ENCODE measurements at regions of chr7 and their contacts with region 1.

Region 1: DNA sequence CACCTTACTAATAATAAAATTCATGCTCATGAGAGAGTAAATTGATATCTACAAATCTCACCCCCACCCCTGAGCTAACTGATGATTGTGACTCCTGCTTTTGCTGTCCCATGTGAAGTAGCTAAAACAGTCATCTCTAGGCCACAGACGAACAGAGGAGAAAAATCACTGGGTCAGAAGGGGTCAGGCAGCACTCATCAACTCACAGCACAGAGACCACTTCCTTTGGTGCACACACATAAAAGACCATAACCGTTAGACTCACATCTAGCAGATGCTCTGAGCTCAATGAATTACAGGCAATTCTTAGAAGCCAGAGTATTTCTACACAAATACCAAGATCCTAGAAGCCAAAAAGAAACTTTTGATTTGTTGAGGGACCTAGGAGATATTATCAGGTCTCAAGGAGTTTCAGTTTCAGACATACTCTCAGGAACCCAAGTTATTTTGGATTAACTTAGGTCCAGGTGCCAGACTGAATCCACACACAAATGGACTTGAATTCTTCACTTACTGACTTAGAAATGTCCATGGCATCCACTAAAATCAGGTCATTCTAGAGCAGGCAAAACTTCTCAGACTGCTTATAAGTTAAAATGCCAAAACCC is 65.0 kb upstream of the TES start:
- DNase-seq: peak; percentile 80
- ATAC-seq: peak; percentile 98
- H3K4me3 Mint-ChIP-seq: peak overlapping the region; percentile 67
- H3K27ac Mint-ChIP-seq: peak overlapping the region; percentile 94
- H3K4me1 Mint-ChIP-seq: peaks cover 73% of the 10 kb centered on the region
- H3K27me3 Mint-ChIP-seq: peaks cover 3% of the 10 kb centered on the region

Region 2: DNA sequence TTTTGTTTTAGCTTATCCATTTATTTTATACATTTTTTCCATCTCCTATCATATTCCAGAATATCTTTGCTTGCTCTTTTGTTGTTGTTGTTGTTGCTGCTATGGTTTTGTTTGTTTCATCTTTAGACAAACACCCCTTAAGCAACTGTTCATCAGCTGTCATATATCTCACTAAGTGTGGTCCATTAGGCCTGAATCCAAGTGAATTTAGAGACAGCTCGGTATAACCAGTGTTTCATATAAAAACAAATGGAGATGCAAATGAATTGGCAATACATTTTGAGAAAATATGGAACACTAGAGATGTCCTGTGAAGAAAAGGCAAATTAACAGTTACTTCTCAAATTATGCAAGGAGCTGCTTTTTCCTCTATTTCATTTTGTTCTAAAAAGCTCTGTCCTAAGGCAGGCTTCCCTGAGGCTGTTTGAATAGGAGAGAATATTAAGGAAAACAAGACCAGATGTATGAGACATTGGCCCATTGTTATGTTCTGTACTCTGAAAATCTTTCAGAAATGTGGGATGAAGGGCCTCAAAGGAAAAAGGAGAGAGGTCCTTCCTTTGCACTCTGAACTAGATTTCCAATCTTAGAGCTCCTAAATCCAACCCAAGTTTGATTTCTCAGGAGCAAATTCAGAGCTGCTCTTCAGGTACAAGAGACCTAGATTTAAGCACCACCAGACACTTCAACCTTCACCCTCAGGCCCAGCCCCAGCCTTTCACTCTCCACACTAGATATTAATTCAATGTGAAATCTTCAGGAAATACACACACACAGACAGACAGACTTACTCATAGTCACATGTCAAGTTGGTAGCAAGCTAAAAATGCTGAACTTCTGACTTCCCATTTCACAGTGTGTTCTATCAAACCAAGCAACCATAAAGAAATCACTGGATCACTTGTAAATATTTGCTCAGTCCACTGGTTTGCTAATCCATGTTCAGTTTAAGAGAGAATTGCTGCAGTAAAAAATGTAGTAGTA is 120.2 kb before region 1 on chr7:
- CTCF ChIA-PET with region 1: no interaction called
- POLR2A ChIA-PET with region 1: no interaction called
- DNase-seq: no peak
- ATAC-seq: no peak
- H3K4me3 Mint-ChIP-seq: no peak overlapping the region
- H3K27ac Mint-ChIP-seq: no peak overlapping the region
- H3K4me1 Mint-ChIP-seq: no peaks in the 10 kb centered on the region
- H3K27me3 Mint-ChIP-seq: peaks cover 2% of the 10 kb centered on the region

Region 3: DNA sequence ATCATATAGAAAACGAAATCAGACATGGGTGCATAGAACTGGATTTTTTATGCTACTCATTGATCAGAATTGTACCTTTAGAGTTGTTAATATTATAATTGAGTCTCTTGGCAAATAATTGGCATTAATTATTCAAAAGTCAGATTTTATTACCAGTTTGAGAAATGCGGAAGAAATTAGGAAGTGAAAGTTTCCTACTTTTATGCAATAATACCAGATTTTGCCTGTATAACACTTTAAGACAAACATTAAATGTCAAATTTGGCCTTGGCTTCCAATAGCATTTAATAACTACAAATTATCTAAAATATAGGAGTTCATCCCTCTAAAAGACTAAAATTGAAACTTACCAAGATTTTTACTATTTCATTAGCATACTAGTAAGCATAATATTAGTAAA is 107.9 kb before region 1 on chr7:
- CTCF ChIA-PET with region 1: no interaction called
- POLR2A ChIA-PET with region 1: no interaction called
- DNase-seq: no peak
- ATAC-seq: no peak
- H3K4me3 Mint-ChIP-seq: no peak overlapping the region
- H3K27ac Mint-ChIP-seq: no peak overlapping the region
- H3K4me1 Mint-ChIP-seq: no peaks in the 10 kb centered on the region
- H3K27me3 Mint-ChIP-seq: no peaks in the 10 kb centered on the region

Region 4: DNA sequence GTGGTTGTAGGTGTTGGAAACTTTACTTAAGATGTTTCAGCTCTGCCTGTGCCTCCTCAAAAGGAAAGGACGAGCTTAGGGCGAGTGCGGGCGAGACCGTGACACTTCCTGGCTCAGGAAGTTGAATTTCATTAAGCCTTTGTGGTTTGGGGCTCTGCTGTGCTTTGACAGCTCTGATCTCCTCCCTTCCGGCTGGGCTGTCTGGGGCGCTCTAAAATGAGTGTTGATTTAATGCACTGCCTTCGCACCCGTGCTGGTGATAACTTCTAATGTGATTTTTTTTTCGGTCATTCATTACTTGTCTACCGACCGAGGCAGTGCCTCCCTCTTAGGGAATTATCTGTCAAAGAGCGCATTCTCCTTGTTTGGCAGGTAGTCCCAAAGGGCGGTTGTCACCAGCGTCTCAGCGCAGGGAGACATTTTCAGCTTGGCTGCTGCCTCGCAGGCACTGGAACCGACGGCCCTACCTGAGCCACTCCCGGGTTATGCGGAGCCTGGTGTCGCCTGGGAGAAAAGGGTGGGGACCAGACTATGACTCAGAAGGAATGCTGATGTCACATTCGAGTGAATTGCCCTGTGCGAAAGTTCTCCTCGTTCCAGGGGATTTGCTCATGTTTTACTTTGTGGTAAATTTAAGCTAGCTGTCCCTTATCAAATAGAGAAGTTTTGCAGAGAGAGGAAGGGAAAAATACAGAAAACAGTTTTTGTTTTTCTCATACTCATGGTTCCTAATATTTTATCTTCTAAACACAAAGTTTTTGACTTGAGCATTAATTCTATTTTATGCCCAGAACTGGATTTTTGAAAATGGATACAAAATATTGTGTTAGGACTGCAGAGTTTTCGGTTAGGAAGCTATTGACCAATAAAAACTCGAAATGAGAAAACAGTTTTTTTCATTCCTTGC is 65.9 kb after region 1 on chr7:
- CTCF ChIA-PET with region 1: interaction called, 4 read pairs
- POLR2A ChIA-PET with region 1: interaction called, 10 read pairs
- DNase-seq: peak; percentile 84
- ATAC-seq: peak; percentile 80
- H3K4me3 Mint-ChIP-seq: peak overlapping the region; percentile 95
- H3K27ac Mint-ChIP-seq: peak overlapping the region; percentile 97
- H3K4me1 Mint-ChIP-seq: peaks cover 49% of the 10 kb centered on the region
- H3K27me3 Mint-ChIP-seq: peaks cover 2% of the 10 kb centered on the region

Measured in activated CD8-positive, alpha-beta T cell treated with anti-CD3 and anti-CD28 coated beads, Interleukin-2, amount 10 ng/mL, durations not matched to agents 7 days and 5 days (primary cell).